ENCODE measurements at regions of chr17 and their contacts with region 1.

Region 1: GRCh38 chr17:29568331-29569244 is at the start of gene TP53I13:
- DNase-seq: peak; percentile 78 to 92 (median 83)
- H3K4me3 ChIP-seq: peak within 1 kb of the TSS; percentile 59
- H3K4me3 Mint-ChIP-seq: peak within 1 kb of the TSS; percentile 91 to 99 (median 97)
- H3K27ac ChIP-seq: peak within 1 kb of the TSS; percentile 63
- H3K27ac Mint-ChIP-seq: peak within 1 kb of the TSS; percentile 81 to 98 (median 94)
- H3K4me1 ChIP-seq: peaks cover 25% of the 10 kb centered on the region
- H3K4me1 Mint-ChIP-seq: peaks cover 31 to 45% (median 38%) of the 10 kb centered on the region in 3 donors
- H3K27me3 ChIP-seq: no peaks in the 10 kb centered on the region
- H3K27me3 Mint-ChIP-seq: no peaks in the 10 kb centered on the region
- total RNA-seq, gene TP53I13: 71.3 to 75.5 TPM

Region 2: DNA sequence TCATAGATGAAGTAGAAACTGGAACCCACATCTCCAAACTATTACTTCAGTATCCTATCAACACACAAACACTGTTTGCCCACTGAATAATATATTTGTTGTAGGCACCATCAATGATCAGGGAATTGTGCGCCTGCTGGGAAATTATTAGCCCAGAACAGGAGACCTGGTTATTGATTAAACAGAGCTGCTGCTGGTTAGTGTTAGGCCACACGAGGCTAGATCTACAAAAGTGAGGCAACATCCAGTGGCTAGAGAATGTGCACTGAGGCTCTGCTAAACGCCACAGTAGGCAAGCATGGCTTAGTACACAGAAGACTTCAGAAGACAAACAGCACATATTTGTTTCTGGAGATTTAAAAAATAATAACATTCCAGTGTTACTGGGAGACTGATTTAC is 12.7 kb before region 1 on chr17:
- CTCF ChIA-PET with region 1: interaction called, 11 read pairs
- POLR2A ChIA-PET with region 1: interaction called, 6 read pairs
- DNase-seq: no peak
- H3K4me3 ChIP-seq: no peak overlapping the region
- H3K4me3 Mint-ChIP-seq: peak overlapping the region in 1 of 7 donors; percentile 23
- H3K27ac ChIP-seq: no peak overlapping the region
- H3K27ac Mint-ChIP-seq: peak overlapping the region in 2 of 8 donors; percentile 11 to 26
- H3K4me1 ChIP-seq: peaks cover 11% of the 10 kb centered on the region
- H3K4me1 Mint-ChIP-seq: peaks cover 22 to 32% (median 30%) of the 10 kb centered on the region in 3 donors
- H3K27me3 ChIP-seq: no peaks in the 10 kb centered on the region
- H3K27me3 Mint-ChIP-seq: no peaks in the 10 kb centered on the region

Region 3: DNA sequence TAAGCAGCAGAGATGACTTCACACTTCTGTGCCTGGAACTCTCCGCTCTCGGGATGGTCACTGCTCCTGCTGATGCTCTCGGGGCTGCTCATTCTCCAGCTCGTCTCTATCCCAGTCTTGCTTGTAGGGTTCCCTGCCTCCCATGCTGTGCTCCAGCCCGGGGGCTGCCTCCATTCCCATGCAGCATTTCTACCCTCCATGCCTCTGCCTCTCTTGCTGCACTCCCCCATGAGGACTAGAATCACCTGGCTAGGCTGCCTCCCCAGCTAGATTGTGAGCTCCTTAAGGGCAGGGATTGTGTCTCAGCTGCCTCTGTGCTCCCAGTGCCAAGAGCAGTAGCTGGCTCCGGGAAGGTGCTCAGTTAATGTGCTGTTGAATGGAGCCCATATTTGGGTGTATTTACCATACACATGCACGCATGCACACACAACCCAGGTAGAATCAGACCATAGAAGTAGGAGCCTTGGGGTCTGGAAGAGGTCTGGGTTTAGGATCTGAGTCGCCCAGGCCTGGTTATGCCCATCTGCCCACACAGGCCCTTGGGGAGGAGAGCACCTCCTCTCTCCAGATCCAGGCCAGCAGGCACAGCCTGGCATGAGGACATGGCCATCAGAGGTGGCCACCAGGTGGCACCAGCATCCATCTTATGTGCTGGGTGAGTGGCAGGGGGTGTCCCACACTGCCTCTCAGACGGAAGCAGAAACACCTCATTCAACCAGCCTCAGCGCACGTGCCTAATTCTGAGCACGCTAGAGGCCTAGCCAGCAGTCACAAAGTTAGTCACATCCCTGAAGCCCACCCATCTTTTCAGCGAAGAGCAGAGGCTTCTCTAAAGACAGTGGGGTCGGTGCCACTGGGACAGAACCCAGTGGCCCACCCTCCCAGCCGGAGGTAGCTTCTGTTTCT is 11.5 kb after region 1 on chr17:
- CTCF ChIA-PET with region 1: interaction called, 81 read pairs
- POLR2A ChIA-PET with region 1: interaction called, 6 read pairs
- DNase-seq: peak; percentile 83 to 92 (median 86)
- H3K4me3 ChIP-seq: no peak overlapping the region
- H3K4me3 Mint-ChIP-seq: peak overlapping the region in 3 of 7 donors; percentile 6 to 51 (median 11)
- H3K27ac ChIP-seq: no peak overlapping the region
- H3K27ac Mint-ChIP-seq: peak overlapping the region; percentile 46 to 93 (median 87)
- H3K4me1 ChIP-seq: peaks cover 17% of the 10 kb centered on the region
- H3K4me1 Mint-ChIP-seq: peaks cover 17 to 23% (median 17%) of the 10 kb centered on the region in 3 donors
- H3K27me3 ChIP-seq: no peaks in the 10 kb centered on the region
- H3K27me3 Mint-ChIP-seq: peaks cover 0 to 2% of the 10 kb centered on the region in 2 donors

Region 4: GRCh38 chr17:30000001-30000754 is 431.6 kb after region 1 on chr17:
- CTCF ChIA-PET with region 1: no interaction called
- POLR2A ChIA-PET with region 1: no interaction called
- DNase-seq: no peak
- H3K4me3 ChIP-seq: no peak overlapping the region
- H3K4me3 Mint-ChIP-seq: peak overlapping the region in 5 of 7 donors; percentile 2 to 54 (median 34)
- H3K27ac ChIP-seq: no peak overlapping the region
- H3K27ac Mint-ChIP-seq: peak overlapping the region in 1 of 8 donors; percentile 11
- H3K4me1 ChIP-seq: no peaks in the 10 kb centered on the region
- H3K4me1 Mint-ChIP-seq: peaks cover 7 to 12% (median 12%) of the 10 kb centered on the region in 3 donors
- H3K27me3 ChIP-seq: no peaks in the 10 kb centered on the region
- H3K27me3 Mint-ChIP-seq: peaks cover 0 to 3% of the 10 kb centered on the region in 2 donors